Natural killer cell (primary cell): ENCODE measurements at regions of chr9 and their contacts with region 1.

Region 1: DNA sequence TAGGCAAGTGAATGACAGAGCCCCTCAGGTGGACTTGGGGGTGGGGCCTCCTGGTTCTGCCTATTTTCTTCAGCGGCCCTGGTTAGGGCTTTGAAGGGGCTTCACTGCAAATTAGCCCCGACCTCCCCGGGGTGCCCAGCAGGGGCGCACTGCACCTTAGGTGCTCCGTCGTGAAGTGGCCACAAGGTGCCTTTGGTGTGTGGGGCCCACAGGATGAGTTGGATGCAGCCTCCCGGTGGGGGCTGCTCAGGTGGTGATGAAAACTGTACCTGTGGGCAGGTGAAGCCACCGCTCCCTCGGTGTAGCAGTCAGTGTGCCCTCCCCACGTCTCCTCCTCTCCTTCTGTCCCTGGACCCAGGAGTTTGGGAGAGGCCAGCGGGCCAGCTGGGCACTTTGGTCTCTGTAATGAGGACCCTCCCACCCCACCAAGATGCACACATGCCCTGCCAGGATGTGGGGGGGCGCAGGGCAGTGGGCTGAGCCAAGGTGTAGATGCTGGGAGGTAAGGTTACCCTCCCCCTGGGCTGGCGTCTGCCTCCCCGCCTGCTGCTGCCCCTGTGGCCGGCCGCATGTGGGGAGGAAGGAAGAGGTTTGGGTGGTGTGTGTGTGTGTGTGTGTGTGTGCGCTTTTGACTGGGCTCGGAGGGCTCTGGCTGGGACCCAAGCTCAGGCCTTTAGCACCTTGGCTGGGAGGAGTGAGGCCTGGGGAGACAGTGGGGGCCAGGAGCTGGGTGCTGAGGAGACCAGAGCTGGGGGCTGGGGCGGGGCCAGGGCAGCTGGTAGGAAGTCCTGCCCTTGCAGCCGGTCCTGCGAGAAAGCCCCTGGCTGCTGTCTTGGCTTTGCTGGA is 55.6 kb downstream of the RXRA start:
- DNase-seq: peak; percentile 69 to 78
- ATAC-seq: peak; percentile 70 to 85 (median 82)
- H3K4me3 ChIP-seq: peak overlapping the region; percentile 31
- H3K4me3 Mint-ChIP-seq: peak overlapping the region; percentile 90
- H3K27ac ChIP-seq: no peak overlapping the region
- H3K27ac Mint-ChIP-seq: peak overlapping the region; percentile 85 to 97
- H3K4me1 ChIP-seq: peaks cover 83% of the 10 kb centered on the region
- H3K4me1 Mint-ChIP-seq: peaks cover 38 to 59% of the 10 kb centered on the region in 2 donors
- H3K27me3 ChIP-seq: no peaks in the 10 kb centered on the region
- H3K27me3 Mint-ChIP-seq: no peaks in the 10 kb centered on the region
- CTCF ChIP-seq: peak; percentile 78

Region 2: GRCh38 chr9:133199648-133200321 is 1182.1 kb before region 1 on chr9:
- intact Hi-C with region 1: no loop called
- DNase-seq: peak; percentile 28 to 48
- ATAC-seq: peak; percentile 74 to 90 (median 82)
- H3K4me3 ChIP-seq: peak overlapping the region; percentile 27
- H3K4me3 Mint-ChIP-seq: peak overlapping the region; percentile 81
- H3K27ac ChIP-seq: no peak overlapping the region
- H3K27ac Mint-ChIP-seq: peak overlapping the region in 1 of 2 donors; percentile 48
- H3K4me1 ChIP-seq: no peaks in the 10 kb centered on the region
- H3K4me1 Mint-ChIP-seq: peaks cover 8 to 15% of the 10 kb centered on the region in 2 donors
- H3K27me3 ChIP-seq: peaks cover 3% of the 10 kb centered on the region
- H3K27me3 Mint-ChIP-seq: peaks cover 15 to 20% of the 10 kb centered on the region in 2 donors
- CTCF ChIP-seq: no peak

Region 3: GRCh38 chr9:134215699-134216448 is 166.0 kb before region 1 on chr9:
- intact Hi-C with region 1: no loop called
- DNase-seq: no peak
- ATAC-seq: peak in 1 of 3 donors; percentile 38
- H3K4me3 ChIP-seq: no peak overlapping the region
- H3K4me3 Mint-ChIP-seq: no peak overlapping the region
- H3K27ac ChIP-seq: no peak overlapping the region
- H3K27ac Mint-ChIP-seq: no peak overlapping the region
- H3K4me1 ChIP-seq: no peaks in the 10 kb centered on the region
- H3K4me1 Mint-ChIP-seq: no peaks in the 10 kb centered on the region
- H3K27me3 ChIP-seq: no peaks in the 10 kb centered on the region
- H3K27me3 Mint-ChIP-seq: no peaks in the 10 kb centered on the region
- CTCF ChIP-seq: no peak

Region 4: DNA sequence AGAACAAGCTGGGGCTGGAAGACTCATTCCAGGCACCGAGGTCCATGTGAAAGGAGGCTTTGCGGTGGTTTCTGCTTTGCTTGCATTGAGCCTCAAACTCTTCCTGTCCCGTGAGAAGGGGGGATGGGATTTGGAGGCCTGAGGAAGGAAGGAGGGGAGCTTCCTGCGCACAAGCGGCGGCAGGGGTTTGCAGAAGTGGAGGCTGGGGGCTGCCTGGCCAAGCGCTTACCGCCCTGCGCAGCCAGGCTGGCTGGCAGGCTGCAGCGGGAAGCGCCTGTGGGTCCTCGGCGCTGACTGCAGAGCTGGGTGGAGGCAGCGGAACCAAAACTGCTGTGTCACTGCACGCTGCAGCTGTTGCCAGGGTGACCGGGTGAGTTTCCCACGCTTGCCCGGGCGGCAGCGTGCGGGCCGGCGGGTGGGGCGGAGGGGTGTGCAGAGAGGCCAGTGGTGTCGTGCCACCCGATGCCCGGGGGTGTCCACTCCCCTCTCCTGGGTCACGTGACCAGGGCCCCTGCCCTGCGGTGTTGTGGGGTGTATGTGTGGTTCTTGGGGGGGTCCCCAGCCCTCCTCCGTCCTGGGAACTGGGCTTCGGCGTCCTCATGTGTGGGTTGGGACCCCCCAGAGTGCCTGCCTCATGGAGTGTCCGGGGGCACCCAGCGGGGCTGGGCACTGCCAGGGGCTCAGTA is 25.4 kb after region 1 on chr9:
- intact Hi-C with region 1: loop called (anchors 2 kb)
- DNase-seq: peak; percentile 78 to 89
- ATAC-seq: peak; percentile 86 to 89 (median 87)
- H3K4me3 ChIP-seq: peak overlapping the region; percentile 27
- H3K4me3 Mint-ChIP-seq: peak overlapping the region; percentile 79
- H3K27ac ChIP-seq: peak overlapping the region; percentile 28
- H3K27ac Mint-ChIP-seq: peak overlapping the region; percentile 59 to 80
- H3K4me1 ChIP-seq: peaks cover 91% of the 10 kb centered on the region
- H3K4me1 Mint-ChIP-seq: peaks cover 40 to 70% of the 10 kb centered on the region in 2 donors
- H3K27me3 ChIP-seq: no peaks in the 10 kb centered on the region
- H3K27me3 Mint-ChIP-seq: no peaks in the 10 kb centered on the region
- CTCF ChIP-seq: no peak